GM12878 (cell line): ENCODE measurements at regions of chr1 and their contacts with region 1.

Region 1: DNA sequence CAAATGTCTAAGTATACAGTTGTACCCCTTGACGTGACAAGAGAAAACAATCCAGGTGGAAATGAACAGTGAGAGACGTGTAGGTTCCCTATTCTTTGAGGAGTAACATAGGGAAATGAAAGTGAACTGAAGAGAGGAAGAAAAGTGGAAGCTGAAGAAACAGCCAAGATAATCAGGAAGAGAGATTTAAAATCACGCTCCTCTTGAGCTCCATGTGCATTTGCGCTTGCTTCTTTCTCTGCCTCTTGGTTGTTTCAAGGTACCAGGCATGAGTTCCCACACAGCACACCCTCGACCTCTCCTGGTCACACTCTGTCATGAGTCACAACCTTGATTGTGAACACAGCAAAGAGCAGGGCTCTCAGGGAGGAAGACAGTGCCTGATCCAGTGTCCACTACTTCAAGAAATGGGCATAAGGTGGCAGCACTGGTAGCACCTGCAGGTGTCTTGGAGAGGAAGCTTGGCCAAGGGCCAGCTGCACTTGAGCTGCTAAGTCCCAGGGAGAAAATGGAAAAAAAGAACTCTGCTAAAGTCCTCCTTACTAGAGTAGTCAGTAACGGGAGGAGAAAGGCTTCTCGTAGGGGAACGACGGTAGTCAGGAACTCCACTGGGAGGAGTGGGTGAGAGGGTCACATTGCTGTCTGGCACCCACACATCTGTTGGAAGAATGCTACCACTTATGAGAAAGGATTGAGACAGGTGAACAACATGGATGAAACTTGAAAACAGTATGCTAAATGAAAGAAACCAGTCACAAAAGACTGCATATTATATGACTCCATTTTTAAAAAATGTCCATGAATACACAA is 18.3 kb upstream of the ARID1A start:
- DNase-seq: peak; percentile 87
- ATAC-seq: peak; percentile 99
- H3K4me3 ChIP-seq: no peak overlapping the region
- H3K27ac ChIP-seq: peak overlapping the region; percentile 11; the same call in 1 of the 2 replicates
- H3K4me1 ChIP-seq: peaks cover 10% of the 10 kb centered on the region
- H3K27me3 ChIP-seq: no peaks in the 10 kb centered on the region
- CTCF ChIP-seq: peak; percentile 71 to 84 (median 73)
- EP300 ChIP-seq: no peak
- POLR2A ChIP-seq: no peak
- RAD21 ChIP-seq: peak; percentile 84

Region 2: DNA sequence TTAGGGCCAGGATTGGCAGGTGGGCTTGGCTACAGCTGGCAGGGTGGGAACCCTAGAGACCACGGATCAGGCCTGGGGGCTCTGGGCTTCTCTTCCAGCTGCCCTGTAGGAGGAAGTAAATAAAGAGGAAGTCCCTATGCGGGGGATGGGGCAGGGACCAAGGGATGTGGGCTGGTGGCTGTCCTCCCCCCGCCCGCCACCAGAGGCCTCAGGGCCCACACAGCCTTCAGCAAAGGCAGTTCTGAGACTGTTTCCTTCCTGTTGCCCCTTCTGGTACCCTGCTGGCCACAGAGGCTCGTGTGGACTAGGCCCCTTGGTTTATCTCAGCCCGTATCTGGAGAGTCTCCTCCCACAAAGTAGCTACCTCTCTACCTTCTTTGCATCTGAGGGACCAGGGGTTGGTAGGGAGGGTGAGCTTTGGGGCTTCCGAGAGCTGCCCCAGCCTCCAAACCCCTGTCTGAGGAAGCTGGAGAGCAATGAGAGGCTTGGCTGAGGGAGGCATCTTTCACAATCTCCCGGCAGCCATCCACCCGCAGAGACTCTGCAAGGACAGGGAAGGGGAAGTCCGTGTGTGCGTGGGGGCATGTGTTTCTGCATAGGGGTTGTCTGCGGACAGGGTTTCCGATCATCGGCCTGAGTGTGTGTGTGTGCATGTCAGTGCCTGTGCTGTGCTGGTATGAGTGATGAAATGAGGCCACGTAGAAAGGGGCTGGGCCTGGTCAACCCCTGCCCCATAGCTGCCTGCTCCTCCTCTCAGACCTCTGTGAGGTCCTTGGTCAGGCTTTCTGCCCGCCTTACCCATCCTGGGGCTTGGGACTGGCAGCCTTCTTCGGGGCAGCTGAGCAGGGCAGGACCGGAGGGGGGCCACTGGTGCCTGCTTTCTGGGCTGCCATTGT is 135.4 kb before region 1 on chr1:
- CTCF ChIA-PET with region 1: interaction called, 10 read pairs
- POLR2A ChIA-PET with region 1: no interaction called
- RAD21 ChIA-PET with region 1: interaction called, 4 read pairs
- SMC1A ChIA-PET with region 1: interaction called, 4 read pairs
- in situ Hi-C with region 1: no loop called
- intact Hi-C with region 1: no loop called
- DNase-seq: peak; percentile 88
- ATAC-seq: peak; percentile 76
- H3K4me3 ChIP-seq: peak overlapping the region; percentile 95
- H3K27ac ChIP-seq: peak overlapping the region; percentile 97
- H3K4me1 ChIP-seq: peaks cover 68% of the 10 kb centered on the region
- H3K27me3 ChIP-seq: no peaks in the 10 kb centered on the region
- CTCF ChIP-seq: peak; percentile 52 to 82 (median 71)
- EP300 ChIP-seq: peak in 1 of 2 experiments; percentile 59; a peak in 3 of 4 replicates
- POLR2A ChIP-seq: peak; percentile 80
- RAD21 ChIP-seq: no peak; the same call in 1 of the 2 replicates

Region 3: GRCh38 chr1:26608895-26609294 is 68.6 kb before region 1 on chr1:
- CTCF ChIA-PET with region 1: interaction called, 83 read pairs
- POLR2A ChIA-PET with region 1: interaction called, 5 read pairs
- RAD21 ChIA-PET with region 1: interaction called, 47 read pairs
- SMC1A ChIA-PET with region 1: interaction called, 72 read pairs
- in situ Hi-C with region 1: no loop called
- intact Hi-C with region 1: no loop called
- DNase-seq: no peak
- ATAC-seq: no peak
- H3K4me3 ChIP-seq: no peak overlapping the region
- H3K27ac ChIP-seq: no peak overlapping the region
- H3K4me1 ChIP-seq: no peaks in the 10 kb centered on the region
- H3K27me3 ChIP-seq: no peaks in the 10 kb centered on the region
- CTCF ChIP-seq: peak in 1 of 3 experiments; percentile 35; a peak in 2 of 6 replicates
- EP300 ChIP-seq: no peak
- POLR2A ChIP-seq: no peak
- RAD21 ChIP-seq: peak; percentile 49

Region 4: GRCh38 chr1:26627954-26628353 is 49.6 kb before region 1 on chr1:
- CTCF ChIA-PET with region 1: interaction called, 10 read pairs
- POLR2A ChIA-PET with region 1: interaction called, 3 read pairs
- RAD21 ChIA-PET with region 1: interaction called, 6 read pairs
- SMC1A ChIA-PET with region 1: interaction called, 12 read pairs
- in situ Hi-C with region 1: no loop called
- intact Hi-C with region 1: no loop called
- DNase-seq: no peak
- ATAC-seq: peak; percentile 60
- H3K4me3 ChIP-seq: no peak overlapping the region
- H3K27ac ChIP-seq: peak overlapping the region; percentile 64
- H3K4me1 ChIP-seq: peaks cover 11% of the 10 kb centered on the region
- H3K27me3 ChIP-seq: no peaks in the 10 kb centered on the region
- CTCF ChIP-seq: no peak
- EP300 ChIP-seq: no peak
- POLR2A ChIP-seq: no peak
- RAD21 ChIP-seq: no peak

Region 5: DNA sequence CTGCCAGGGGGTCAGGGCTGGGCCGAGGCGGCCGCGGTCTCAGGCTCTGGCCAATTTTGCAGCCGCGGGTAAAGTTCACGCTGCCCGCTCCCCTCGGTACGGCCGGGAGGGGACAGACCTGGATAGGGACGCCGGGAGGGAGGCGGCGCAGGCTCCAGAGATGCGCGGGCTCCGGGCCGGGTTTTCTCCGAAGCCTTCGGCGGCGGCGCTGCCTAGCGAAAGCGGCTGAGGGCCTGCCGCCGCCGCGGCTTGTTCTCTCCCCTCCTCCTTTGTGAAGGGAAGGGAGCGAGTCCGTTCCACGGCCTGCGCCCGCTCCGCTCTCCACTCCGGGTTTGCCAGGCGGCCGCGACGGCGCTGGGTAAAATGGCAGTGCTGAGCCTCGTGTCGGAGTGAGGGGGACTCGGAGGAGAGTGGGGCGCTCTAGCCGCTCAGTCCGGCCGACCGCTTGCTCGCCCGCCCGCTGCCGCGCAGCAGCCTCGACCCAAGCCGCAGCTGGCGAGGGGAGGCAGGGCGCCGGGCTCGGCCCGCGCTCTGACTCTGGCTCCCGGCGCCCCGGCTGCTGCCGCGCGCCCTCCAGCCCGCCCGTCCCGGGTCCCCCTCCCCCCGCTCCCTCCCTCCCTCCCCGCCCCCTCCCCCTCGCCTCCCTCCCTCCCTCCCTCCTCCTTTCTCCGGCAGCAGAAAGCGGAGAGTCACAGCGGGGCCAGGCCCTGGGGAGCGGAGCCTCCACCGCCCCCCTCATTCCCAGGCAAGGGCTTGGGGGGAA is 18.0 kb after region 1 on chr1 and contains the start of gene ARID1A:
- CTCF ChIA-PET with region 1: interaction called, 65 read pairs
- POLR2A ChIA-PET with region 1: interaction called, 83 read pairs
- RAD21 ChIA-PET with region 1: interaction called, 39 read pairs
- SMC1A ChIA-PET with region 1: interaction called, 79 read pairs
- in situ Hi-C with region 1: no loop called
- intact Hi-C with region 1: loop called (anchors 2 kb)
- DNase-seq: peak; percentile 82
- ATAC-seq: peak; percentile 69
- H3K4me3 ChIP-seq: peak within 1 kb of the TSS; percentile 98
- H3K27ac ChIP-seq: peak within 1 kb of the TSS; percentile 98
- H3K4me1 ChIP-seq: peaks cover 13% of the 10 kb centered on the region
- H3K27me3 ChIP-seq: no peaks in the 10 kb centered on the region
- CTCF ChIP-seq: no peak
- EP300 ChIP-seq: peak in 1 of 2 experiments; percentile 74; a peak in 1 of 4 replicates
- POLR2A ChIP-seq: peak; percentile 97
- RAD21 ChIP-seq: peak; percentile 27; the same call in 1 of the 2 replicates
- polyA plus RNA-seq, gene ARID1A: 10.0 to 24.5 TPM

Region 6: DNA sequence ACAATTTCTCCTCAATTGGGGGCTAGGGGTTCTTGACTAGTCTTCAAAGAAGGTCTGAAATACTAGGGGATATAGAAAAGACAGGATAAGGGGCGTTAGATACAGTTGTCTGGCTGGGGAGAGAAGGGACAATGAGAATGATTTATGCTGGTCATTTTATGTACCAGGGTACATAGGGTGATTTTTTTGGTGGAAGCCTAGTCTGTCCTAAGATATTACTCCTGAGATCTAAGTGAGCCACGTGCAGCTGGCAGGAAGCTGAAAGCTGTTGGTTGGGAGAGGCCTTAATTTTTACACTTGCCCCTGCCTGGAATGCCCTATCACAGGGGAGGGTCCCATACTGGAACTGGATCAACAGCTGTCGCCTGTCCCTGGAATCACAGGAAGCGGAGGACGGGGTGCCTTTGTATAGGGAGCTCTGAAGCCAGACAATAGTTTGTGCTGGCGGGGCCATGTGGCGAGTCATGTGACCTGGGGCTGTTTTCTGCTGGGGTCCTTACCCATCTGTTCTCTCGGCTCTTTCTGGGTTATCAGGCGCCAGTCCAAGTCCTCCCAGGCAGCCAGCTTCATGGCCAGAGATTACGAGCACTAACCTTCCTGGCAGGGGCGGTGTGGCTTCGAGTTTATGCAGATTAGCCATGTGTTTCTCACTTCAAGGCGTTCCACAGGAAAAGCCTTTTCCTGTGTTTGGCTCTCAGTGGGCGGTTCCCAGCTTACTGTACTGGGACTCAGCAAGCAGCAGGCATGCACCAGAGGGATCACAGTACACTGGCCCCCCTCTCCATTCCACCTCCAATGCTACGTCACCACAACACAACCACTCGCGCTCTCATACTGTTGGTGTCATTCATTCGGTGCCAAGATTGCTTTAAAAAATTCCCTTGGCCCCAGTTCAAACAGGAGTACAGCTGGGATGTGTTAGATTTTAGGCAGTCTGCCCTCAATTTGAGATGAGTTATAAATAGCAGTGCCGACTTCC is 45.8 kb after region 1 on chr1:
- CTCF ChIA-PET with region 1: interaction called, 11 read pairs
- POLR2A ChIA-PET with region 1: interaction called, 3 read pairs
- RAD21 ChIA-PET with region 1: interaction called, 5 read pairs
- SMC1A ChIA-PET with region 1: interaction called, 6 read pairs
- in situ Hi-C with region 1: no loop called
- intact Hi-C with region 1: no loop called
- DNase-seq: no peak
- ATAC-seq: peak; percentile 61
- H3K4me3 ChIP-seq: peak overlapping the region; percentile 49
- H3K27ac ChIP-seq: peak overlapping the region; percentile 72
- H3K4me1 ChIP-seq: peaks cover 53% of the 10 kb centered on the region
- H3K27me3 ChIP-seq: no peaks in the 10 kb centered on the region
- CTCF ChIP-seq: no peak
- EP300 ChIP-seq: no peak
- POLR2A ChIP-seq: 0 out of 2 replicates have a peak, but pooled peaks have one; percentile 36
- RAD21 ChIP-seq: no peak